Posterior cingulate gyrus (tissue), 11 donors: ENCODE measurements at regions of chr6 and their contacts with region 1.

Region 1: GRCh38 chr6:168791917-168792316 is 350.9 kb downstream of the SMOC2 start:
- DNase-seq: peak in 9 of 10 donors; percentile 20 to 95 (median 58)

Region 2: DNA sequence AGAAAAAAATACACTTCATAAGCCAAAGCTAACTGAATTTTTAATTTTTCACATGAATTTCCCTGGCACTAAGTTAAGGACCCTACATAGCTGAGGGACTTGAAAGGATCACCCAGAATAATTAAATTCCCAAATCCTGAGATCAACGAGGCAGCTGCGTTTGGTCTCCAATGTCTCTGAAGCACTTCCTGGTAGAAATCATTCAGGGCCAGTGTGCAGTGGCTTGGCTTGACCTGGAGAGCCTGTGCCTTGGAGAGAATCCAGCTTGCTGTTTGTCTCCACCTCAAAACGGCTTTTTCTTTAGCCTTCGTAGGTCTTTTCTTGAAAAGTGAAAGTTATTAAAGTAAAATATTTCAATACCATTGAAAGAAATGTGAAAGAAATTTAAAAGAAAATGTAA is 258.5 kb before region 1 on chr6:
- intact Hi-C with region 1: no loop called
- DNase-seq: no peak

Region 3: GRCh38 chr6:168666699-168667425 is 125.1 kb before region 1 on chr6:
- intact Hi-C with region 1: no loop called
- DNase-seq: no peak

Region 4: GRCh38 chr6:168866534-168866933 is 74.6 kb after region 1 on chr6:
- intact Hi-C with region 1: loop called (anchors 10 kb)
- DNase-seq: peak in 2 of 10 donors; percentile 7 to 75